MCF 10A (cell line): ENCODE measurements at regions of chr14 and their contacts with region 1.

Region 1: DNA sequence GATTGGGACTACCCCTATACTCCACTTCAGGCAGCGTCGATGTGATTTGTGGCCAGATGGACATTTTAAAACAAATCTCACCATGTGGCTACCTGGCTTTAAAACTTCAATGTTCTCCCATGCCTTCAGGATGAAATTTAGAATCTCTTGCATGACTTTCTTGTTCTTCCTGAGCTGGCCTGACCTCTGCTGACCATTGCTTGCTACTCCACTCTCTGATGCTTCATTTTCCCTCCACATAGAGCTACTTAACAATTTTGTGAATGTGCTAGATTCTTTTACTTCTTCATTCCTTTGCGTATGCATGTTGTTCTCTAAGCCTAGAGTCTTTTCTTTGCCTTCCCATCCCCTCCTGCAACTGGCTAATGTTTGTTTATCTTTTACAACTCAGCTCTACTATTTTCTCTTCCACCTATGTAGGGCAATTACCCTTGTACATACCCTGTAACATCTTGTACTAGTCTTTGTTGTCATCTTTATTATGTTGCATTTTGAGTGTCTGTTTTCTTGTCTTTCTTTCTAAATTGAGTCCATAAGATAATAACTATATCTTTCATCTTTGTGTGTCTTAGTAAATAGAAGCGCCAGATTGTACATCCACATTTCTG is 41.2 kb downstream of the YLPM1 start:
- DNase-seq: peak; percentile 59
- H3K4me3 Mint-ChIP-seq: no peak overlapping the region
- H3K27ac Mint-ChIP-seq: no peak overlapping the region
- H3K4me1 Mint-ChIP-seq: no peaks in the 10 kb centered on the region
- H3K27me3 Mint-ChIP-seq: no peaks in the 10 kb centered on the region
- CTCF ChIP-seq: peak; percentile 75

Region 2: DNA sequence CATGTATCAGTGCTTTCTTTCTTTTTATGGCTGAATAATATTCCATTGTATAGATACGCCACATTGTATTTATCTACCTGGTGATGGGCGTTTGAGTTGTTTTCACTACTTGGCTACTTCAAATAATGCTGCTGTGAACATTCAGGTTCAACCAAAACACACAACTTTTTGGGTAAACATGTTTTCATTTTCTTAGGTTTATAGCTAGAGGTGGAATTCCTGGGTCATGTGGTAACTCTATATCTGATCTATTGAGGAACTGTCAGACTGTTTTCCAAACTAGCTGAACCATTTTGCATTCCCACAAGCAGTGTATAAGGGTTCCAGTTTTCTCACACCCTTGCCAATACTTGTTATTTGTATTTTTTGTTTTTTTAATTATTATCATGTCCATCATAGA is 696.1 kb before region 1 on chr14:
- CTCF ChIA-PET with region 1: no interaction called
- POLR2A ChIA-PET with region 1: no interaction called
- intact Hi-C with region 1: no loop called
- DNase-seq: no peak
- H3K4me3 Mint-ChIP-seq: no peak overlapping the region
- H3K27ac Mint-ChIP-seq: no peak overlapping the region
- H3K4me1 Mint-ChIP-seq: no peaks in the 10 kb centered on the region
- H3K27me3 Mint-ChIP-seq: no peaks in the 10 kb centered on the region
- CTCF ChIP-seq: no peak

Region 3: GRCh38 chr14:74362361-74362915 is 441.9 kb before region 1 on chr14:
- CTCF ChIA-PET with region 1: no interaction called
- POLR2A ChIA-PET with region 1: no interaction called
- intact Hi-C with region 1: loop called (anchors 1 kb)
- DNase-seq: peak; percentile 84
- H3K4me3 Mint-ChIP-seq: no peak overlapping the region
- H3K27ac Mint-ChIP-seq: no peak overlapping the region
- H3K4me1 Mint-ChIP-seq: no peaks in the 10 kb centered on the region
- H3K27me3 Mint-ChIP-seq: peaks cover 23% of the 10 kb centered on the region
- CTCF ChIP-seq: peak; percentile 82

Region 4: GRCh38 chr14:74501135-74501614 is 303.1 kb before region 1 on chr14:
- CTCF ChIA-PET with region 1: interaction called, 3 read pairs
- POLR2A ChIA-PET with region 1: no interaction called
- intact Hi-C with region 1: loop called (anchors 1 kb)
- DNase-seq: peak; percentile 63
- H3K4me3 Mint-ChIP-seq: no peak overlapping the region
- H3K27ac Mint-ChIP-seq: no peak overlapping the region
- H3K4me1 Mint-ChIP-seq: peaks cover 14% of the 10 kb centered on the region
- H3K27me3 Mint-ChIP-seq: no peaks in the 10 kb centered on the region
- CTCF ChIP-seq: peak; percentile 53

Region 5: GRCh38 chr14:75025082-75025481 is 220.8 kb after region 1 on chr14:
- CTCF ChIA-PET with region 1: no interaction called
- POLR2A ChIA-PET with region 1: no interaction called
- intact Hi-C with region 1: no loop called
- DNase-seq: no peak
- H3K4me3 Mint-ChIP-seq: no peak overlapping the region
- H3K27ac Mint-ChIP-seq: no peak overlapping the region
- H3K4me1 Mint-ChIP-seq: no peaks in the 10 kb centered on the region
- H3K27me3 Mint-ChIP-seq: no peaks in the 10 kb centered on the region
- CTCF ChIP-seq: no peak